ENCODE measurements at regions of chr12 and their contacts with region 1.

Region 1: DNA sequence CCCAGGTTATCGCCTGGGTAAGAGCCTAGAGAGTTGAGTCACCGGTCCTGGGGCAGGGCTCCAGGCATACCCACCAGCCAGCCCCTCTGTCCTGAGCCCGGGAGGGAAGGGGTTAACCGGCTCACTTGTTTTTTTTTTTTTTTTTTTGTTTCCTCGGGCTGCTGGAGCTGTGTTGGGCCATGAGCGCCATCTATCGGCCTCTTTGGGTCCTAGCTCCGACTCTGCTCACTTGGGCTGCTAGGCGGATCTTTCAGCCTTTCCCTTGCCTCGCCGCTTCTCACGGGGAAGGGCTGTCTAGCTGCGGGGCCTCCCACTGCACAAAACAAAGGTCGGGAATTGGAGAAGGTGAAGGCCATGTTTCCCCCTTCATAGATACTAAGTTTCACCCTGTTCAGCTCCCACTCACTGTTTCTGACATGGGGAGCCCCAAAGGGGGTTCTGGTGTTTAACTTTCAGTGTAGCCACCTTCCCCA is 2.8 kb upstream of the SMUG1 start:
- DNase-seq: peak; percentile 73 to 84 (median 81)
- ATAC-seq: peak; percentile 19 to 65 (median 59)
- H3K4me3 ChIP-seq: no peak overlapping the region
- H3K27ac ChIP-seq: no peak overlapping the region
- H3K4me1 ChIP-seq: peaks cover 0 to 20% (median 9%) of the 10 kb centered on the region in 12 donors
- H3K27me3 ChIP-seq: peaks cover 0 to 64% (median 34%) of the 10 kb centered on the region in 9 donors
- CTCF ChIP-seq: peak; percentile 71 to 91 (median 78)
- POLR2A ChIP-seq: no peak

Region 2: DNA sequence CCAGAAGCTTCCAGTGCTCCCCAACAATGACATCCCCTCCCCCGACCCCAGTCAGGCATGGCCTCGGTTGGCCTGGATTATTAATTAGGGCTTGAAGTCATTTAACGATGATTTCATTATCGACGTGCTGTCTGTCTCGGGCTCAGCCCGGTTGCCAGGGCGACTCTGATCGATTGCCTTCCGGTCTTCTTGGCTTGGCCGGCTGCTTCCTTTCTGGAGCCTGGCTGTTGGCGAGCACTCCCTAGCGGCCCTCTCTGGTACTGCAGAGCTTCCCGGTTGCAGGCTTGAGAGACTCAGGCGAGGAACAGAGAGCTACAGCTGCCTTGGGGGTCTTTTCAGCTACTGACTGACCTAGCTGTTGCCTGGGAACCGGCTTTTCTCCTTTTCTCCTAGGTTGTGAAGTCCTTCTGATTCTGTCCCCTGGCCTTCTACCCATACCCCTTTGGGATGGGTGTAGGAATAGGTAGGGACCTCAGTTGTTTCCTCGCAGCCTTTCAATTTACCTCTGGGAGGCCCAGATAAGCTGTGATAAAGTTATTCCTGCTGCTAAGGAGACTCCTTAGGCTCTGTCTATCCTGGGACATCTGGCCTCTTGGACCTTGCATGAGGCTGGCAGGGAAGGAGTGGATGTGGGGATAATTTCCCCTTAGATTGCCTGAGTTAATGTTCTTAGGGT is 434.4 kb before region 1 on chr12:
- intact Hi-C with region 1: loop called in 1 of 10 experiments (anchors 10 kb)
- DNase-seq: peak; percentile 62 to 86 (median 79)
- ATAC-seq: peak; percentile 25 to 58 (median 51)
- H3K4me3 ChIP-seq: peak overlapping the region in 5 of 12 donors; percentile 5 to 27 (median 26)
- H3K27ac ChIP-seq: no peak overlapping the region
- H3K4me1 ChIP-seq: peaks cover 0 to 21% (median 4%) of the 10 kb centered on the region in 12 donors
- H3K27me3 ChIP-seq: peaks cover 0 to 58% (median 5%) of the 10 kb centered on the region in 9 donors
- CTCF ChIP-seq: peak; percentile 80 to 94 (median 88)
- POLR2A ChIP-seq: no peak

Region 3: GRCh38 chr12:54005853-54006686 is 185.5 kb before region 1 on chr12:
- intact Hi-C with region 1: loop called in 8 of 10 experiments (anchors 1 to 5 kb)
- DNase-seq: peak; percentile 78 to 93 (median 85)
- ATAC-seq: peak; percentile 68 to 92 (median 89)
- H3K4me3 ChIP-seq: peak overlapping the region in 9 of 12 donors; percentile 10 to 49 (median 36)
- H3K27ac ChIP-seq: no peak overlapping the region
- H3K4me1 ChIP-seq: peaks cover 0 to 20% (median 11%) of the 10 kb centered on the region in 12 donors
- H3K27me3 ChIP-seq: peaks cover 63 to 100% (median 95%) of the 10 kb centered on the region in 9 donors
- CTCF ChIP-seq: peak; percentile 84 to 96 (median 94)
- POLR2A ChIP-seq: no peak

Region 4: DNA sequence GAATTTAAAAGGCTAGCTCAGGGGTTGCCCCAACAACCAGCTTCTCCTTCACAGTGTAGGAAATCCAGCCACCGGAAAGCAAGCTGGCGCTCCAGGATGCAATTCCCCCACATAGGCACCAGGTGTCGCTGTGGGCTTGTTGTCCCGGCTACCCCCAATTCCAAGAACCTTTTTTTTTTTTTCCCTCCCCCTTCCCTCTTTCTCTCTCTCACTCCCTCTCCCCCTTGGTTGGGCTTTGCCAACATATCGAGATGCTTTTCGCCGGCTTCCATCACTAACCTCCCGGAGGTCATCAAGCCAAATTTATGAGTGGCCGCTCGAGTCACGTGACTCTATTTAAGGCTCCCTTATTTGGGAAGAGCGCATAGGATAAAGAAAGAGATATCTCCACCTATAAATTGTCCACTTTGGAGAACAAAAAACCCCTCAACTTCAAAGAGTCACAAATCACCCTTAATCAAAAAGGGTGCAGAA is 158.9 kb before region 1 on chr12 and contains the start of gene HOXC5:
- intact Hi-C with region 1: loop called in 3 of 10 experiments (anchors 1 to 5 kb)
- DNase-seq: peak in 2 of 5 donors; percentile 31 to 50
- ATAC-seq: peak in 1 of 4 donors; percentile 45
- H3K4me3 ChIP-seq: peak within 1 kb of the TSS in 9 of 12 donors; percentile 4 to 41 (median 20)
- H3K27ac ChIP-seq: no peak within 1 kb of the TSS
- H3K4me1 ChIP-seq: peaks cover 0 to 33% (median 5%) of the 10 kb centered on the region in 12 donors
- H3K27me3 ChIP-seq: peaks cover 64 to 100% (median 99%) of the 10 kb centered on the region in 9 donors
- CTCF ChIP-seq: peak; percentile 57 to 76 (median 72)
- POLR2A ChIP-seq: no peak
- total RNA-seq, gene HOXC5: not detected

Region 5: DNA sequence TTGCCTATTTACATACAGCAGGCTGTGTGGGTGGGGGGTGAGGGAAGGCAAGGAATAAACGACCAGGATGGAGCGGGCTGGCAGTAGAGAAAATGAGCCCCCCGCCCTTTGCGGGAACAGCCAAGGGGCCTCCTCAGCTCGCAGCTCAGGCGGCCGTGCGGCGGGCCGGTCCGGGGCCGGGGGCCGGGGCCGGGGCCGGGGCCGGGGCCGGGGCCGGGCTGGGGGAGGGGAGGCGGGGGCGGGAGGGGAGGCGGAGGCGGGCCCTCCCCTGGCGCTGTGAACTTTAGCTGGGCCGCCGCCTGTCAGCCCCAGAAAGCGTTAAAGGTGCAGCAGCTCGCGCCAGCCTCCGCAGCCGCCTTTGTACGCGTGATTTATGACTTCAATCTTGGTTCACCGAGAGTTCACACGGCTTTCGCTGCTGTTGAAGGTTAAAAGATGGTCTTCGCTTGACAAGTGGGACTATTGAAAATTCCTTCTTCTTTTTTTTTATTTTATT is 109.1 kb before region 1 on chr12:
- intact Hi-C with region 1: no loop called
- DNase-seq: no peak
- ATAC-seq: no peak
- H3K4me3 ChIP-seq: peak overlapping the region in 2 of 12 donors; percentile 4 to 38
- H3K27ac ChIP-seq: peak overlapping the region in 1 of 12 donors; percentile 60
- H3K4me1 ChIP-seq: peaks cover 0 to 4% (median 0%) of the 10 kb centered on the region in 12 donors
- H3K27me3 ChIP-seq: peaks cover 0 to 84% (median 38%) of the 10 kb centered on the region in 9 donors
- CTCF ChIP-seq: no peak
- POLR2A ChIP-seq: no peak

Region 6: GRCh38 chr12:55142669-55143565 is 951.3 kb after region 1 on chr12:
- intact Hi-C with region 1: no loop called
- DNase-seq: peak in 1 of 5 donors; percentile 13
- ATAC-seq: no peak
- H3K4me3 ChIP-seq: no peak overlapping the region
- H3K27ac ChIP-seq: no peak overlapping the region
- H3K4me1 ChIP-seq: no peaks in the 10 kb centered on the region
- H3K27me3 ChIP-seq: peaks cover 0 to 5% (median 0%) of the 10 kb centered on the region in 9 donors
- CTCF ChIP-seq: peak; percentile 46 to 77 (median 58)
- POLR2A ChIP-seq: no peak

Measured in heart left ventricle (tissue), 16 donors.